ENCODE measurements at regions of chr1 and their contacts with region 1.

Region 1: DNA sequence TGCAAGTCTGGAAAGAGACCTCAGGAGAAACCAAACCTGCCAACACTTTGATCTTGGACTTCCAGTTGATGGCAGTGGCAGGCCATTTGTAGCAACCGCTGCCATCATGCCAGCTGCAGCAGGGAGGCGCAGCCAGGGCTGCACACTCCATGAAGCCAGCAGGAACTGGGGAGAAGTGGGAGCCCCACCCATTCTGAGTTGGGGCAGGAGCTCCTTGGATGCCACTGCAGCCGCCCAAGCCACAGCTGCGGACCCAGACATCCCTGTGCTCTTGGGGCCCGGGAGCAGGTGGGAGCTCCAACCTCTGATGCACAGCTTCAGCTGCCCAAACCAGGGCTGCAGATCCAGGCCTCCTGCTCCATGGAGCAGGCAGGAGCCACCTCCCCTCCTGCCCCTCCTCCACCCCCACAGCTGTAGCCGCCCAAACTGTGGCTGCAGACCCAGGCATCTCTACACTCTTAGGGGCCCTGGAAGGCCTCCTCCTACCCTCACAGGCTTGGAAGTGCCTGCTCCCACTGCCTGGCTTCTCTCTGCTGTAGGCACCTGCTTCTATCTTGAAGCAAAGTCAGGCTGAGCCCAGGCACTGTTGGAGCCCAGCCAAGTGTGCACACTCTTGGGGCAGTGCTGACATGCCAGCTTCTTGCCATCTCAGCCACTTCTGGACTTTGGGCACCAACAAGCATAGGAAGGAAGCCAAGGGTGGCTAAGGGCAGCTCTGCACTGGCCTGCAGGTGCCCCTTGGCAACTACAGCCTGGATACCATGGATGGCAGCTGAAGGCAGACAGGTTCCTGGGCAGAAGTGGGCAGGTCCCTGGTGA is 20.0 kb upstream of the DISP1 start:
- DNase-seq: no peak
- H3K4me3 ChIP-seq: no peak overlapping the region
- H3K27ac ChIP-seq: no peak overlapping the region
- H3K4me1 ChIP-seq: no peaks in the 10 kb centered on the region
- H3K27me3 ChIP-seq: no peaks in the 10 kb centered on the region
- CTCF ChIP-seq: no peak
- POLR2A ChIP-seq: no peak

Region 2: DNA sequence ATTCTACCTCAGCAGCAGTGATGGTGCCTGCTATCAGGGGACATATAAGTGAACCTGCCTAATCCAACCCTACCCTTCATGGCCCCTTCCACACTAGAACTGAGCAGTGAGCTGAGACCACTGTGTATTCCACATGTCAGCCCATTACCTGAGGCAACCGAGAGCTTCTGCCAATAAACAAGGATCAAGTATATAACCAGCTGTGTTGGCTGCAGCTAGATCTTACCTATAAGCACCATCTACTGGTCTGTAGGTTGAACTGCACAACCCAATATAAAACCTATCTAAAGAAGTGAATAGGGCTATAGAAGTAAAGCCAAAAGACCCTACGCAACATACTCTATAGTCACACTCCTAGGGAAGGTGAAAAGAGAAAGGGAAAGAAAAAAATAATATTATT is 623.9 kb before region 1 on chr1:
- intact Hi-C with region 1: no loop called
- DNase-seq: no peak
- H3K4me3 ChIP-seq: no peak overlapping the region
- H3K27ac ChIP-seq: no peak overlapping the region
- H3K4me1 ChIP-seq: no peaks in the 10 kb centered on the region
- H3K27me3 ChIP-seq: no peaks in the 10 kb centered on the region
- CTCF ChIP-seq: peak in 2 of 3 donors; percentile 27 to 44
- POLR2A ChIP-seq: no peak

Region 3: GRCh38 chr1:223084464-223084866 is 289.6 kb after region 1 on chr1:
- intact Hi-C with region 1: loop called (anchors 2 kb)
- DNase-seq: no peak
- H3K4me3 ChIP-seq: no peak overlapping the region
- H3K27ac ChIP-seq: no peak overlapping the region
- H3K4me1 ChIP-seq: no peaks in the 10 kb centered on the region
- H3K27me3 ChIP-seq: no peaks in the 10 kb centered on the region
- CTCF ChIP-seq: no peak
- POLR2A ChIP-seq: no peak

Measured in breast epithelium (tissue), 4 donors.